Mammary epithelial cell (primary cell): ENCODE measurements at regions of chr6 and their contacts with region 1.

Region 1: DNA sequence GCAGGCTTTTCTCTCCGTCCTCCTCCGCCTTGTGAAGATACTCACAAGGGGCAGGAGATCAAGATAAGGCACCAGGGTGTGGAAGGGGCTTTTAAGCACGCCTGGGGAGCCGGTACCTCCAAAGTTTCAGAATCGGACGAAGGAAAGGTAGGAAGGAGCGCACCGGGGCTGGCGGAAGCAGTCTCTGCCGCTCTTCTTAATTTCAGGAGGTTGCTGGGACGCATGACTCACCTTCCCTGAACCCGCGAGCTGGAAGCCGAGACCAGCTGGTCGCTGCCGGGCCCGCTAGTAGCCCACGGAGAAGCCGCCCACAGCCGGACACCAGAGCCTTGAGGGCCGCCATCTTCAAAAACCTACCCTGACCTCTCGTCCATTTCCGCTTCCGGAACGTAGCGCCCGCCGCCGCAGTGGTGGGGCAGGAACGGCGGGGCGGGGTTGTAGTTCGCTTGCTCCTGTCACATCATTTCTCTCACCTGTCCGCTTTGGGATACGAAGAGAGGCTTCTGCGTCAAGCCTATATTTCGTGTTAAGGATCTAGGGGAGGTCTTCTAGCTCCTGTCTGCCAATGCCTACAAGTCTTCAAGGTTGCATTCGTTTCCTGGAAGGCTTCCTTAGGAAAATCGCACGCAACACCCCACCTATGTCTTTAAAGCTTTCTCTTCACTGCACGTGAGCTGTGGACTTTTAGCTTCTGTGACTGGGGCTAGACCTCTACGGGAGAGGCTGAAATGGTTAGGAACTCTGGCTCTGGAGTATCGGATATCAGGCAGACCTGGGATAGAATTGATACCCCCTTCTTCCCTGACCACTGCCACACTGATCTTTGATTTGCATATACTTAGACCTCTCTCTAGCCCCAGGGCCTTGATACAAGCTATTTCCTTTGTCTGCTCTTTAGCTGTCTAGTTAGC is at the start of gene MRPS18A:
- DNase-seq: peak; percentile 90
- H3K4me3 ChIP-seq: peak within 1 kb of the TSS; percentile 72 to 77 (median 76)
- H3K27ac ChIP-seq: peak within 1 kb of the TSS; percentile 69
- H3K4me1 ChIP-seq: peaks cover 14% of the 10 kb centered on the region
- H3K27me3 ChIP-seq: no peaks in the 10 kb centered on the region
- CTCF ChIP-seq: no peak
- total RNA-seq, gene MRPS18A: 27.0 to 49.0 TPM

Region 2: DNA sequence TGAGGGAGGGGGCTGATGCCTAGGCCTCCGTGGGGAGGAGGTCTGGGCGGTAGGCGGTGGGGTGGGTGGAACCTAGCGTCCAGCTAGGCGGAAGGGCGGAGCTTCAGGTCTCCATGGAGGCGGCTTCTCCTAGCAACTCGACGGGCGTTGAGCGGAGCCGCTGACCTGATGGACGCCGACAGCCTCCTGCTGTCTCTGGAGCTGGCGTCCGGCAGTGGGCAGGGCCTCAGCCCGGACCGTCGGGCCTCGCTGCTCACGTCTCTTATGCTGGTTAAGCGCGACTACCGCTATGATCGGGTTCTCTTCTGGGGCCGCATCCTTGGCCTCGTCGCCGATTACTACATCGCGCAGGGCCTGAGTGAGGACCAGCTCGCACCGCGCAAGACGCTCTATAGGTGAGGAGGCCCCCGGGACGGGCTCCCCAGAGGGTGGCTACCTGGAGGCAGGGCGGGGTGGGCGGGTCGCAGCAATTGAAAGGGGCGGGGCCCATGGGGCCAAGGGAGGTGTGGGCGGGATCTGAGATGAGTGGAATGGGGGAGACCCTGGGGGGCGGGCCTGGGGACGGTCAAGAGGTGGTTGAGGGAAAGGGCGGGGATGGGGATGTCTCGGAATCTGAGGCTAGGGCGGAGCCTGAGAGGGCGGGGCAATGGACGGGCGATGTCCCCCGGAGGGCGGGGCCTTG is 42.6 kb before region 1 on chr6 and contains the start of gene RSPH9:
- CTCF ChIA-PET with region 1: no interaction called
- dilution Hi-C with region 1: loop called (anchors 5 kb)
- in situ Hi-C with region 1: no loop called
- intact Hi-C with region 1: no loop called
- DNase-seq: no peak
- H3K4me3 ChIP-seq: peak within 1 kb of the TSS in 2 of 3 experiments; percentile 1 to 12
- H3K27ac ChIP-seq: no peak within 1 kb of the TSS
- H3K4me1 ChIP-seq: no peaks in the 10 kb centered on the region
- H3K27me3 ChIP-seq: no peaks in the 10 kb centered on the region
- CTCF ChIP-seq: no peak
- total RNA-seq, gene RSPH9: 0.50 TPM in 1 of 2 donors, not detected in the other

Region 3: DNA sequence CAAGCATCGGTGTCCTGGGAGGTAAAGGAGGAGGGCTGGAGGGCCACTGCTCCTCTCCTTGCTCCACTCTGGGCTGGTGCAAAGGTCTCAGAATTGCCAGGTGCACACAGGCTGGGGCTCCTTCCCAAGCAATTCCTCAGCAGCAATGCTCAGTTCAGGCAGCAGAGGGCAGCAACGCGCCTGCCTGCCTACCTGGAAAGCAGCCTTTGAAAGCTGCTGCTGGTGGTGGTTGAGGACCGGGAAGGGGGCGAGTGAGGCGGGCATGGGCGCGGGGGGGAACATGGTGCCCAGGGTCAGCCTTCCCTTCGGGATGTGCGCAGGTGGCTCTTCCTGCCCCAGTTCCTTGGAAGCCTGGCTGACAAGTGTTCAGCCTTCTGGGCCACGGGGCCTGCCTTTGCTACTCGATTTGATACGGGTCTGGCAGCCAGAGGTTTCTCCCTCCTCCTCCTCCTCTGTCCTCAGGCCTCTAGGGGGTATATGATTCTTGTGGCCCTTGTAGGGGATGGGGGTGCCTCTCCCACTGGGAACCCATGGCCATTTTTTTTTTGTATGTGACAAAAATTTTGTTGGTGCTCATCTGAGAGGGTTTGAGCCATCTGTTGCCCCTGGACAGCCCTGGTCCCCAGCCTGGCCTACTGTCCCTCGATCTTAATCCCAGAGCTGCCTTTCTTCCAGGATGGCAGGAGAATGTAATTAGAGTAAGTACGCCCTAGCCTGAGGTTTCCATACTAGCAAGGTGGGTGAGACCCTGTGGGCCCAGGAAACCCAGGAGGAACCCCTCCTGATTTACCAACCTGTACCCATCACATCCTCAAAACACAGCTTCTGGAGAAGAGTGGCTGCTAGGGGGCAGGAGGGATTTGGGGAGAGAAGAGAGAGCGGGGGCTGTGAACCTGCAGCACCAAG is 20.2 kb before region 1 on chr6:
- CTCF ChIA-PET with region 1: no interaction called
- dilution Hi-C with region 1: no loop called
- in situ Hi-C with region 1: no loop called
- intact Hi-C with region 1: loop called (anchors 2 kb)
- DNase-seq: peak; percentile 69
- H3K4me3 ChIP-seq: no peak overlapping the region
- H3K27ac ChIP-seq: peak overlapping the region; percentile 2
- H3K4me1 ChIP-seq: peaks cover 47% of the 10 kb centered on the region
- H3K27me3 ChIP-seq: no peaks in the 10 kb centered on the region
- CTCF ChIP-seq: peak; percentile 96 to 98

Region 4: DNA sequence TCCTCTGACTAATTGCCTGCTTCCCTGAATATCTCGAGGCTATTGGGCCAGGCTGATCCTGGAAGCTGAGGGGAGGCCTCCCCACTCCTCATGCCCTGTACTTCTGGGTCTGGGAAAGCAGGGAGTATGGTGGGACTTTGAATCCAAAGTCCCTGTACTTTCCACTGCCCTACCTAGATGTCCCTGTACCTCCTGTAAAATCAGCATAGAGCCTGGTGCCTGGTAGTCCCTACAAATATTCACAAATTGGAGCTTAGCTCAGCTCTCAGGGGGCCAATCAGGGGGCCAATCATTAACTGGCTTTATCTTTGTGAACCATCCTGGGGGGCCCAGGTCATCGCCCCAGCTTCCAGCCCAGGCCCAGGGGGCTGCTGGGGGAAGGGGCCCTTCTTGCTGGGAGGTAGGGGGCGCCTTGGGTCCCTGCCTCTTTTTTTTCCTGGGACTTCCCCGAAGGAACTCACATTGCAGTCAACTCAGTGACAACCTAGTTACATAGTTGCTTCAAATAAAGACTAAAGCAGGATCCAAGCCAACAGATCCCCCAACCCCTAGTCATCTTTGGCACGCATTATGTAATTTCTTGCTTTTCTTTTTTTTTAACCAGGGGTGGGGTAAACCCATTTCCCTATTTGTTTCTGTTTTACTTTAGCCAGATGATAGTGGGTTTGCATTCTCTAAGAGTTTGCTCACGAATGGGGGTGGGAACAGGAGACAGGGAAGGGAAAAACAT is 75.4 kb after region 1 on chr6:
- CTCF ChIA-PET with region 1: no interaction called
- dilution Hi-C with region 1: loop called (anchors 5 kb)
- in situ Hi-C with region 1: no loop called
- intact Hi-C with region 1: no loop called
- DNase-seq: no peak
- H3K4me3 ChIP-seq: no peak overlapping the region
- H3K27ac ChIP-seq: no peak overlapping the region
- H3K4me1 ChIP-seq: no peaks in the 10 kb centered on the region
- H3K27me3 ChIP-seq: no peaks in the 10 kb centered on the region
- CTCF ChIP-seq: no peak

Region 5: GRCh38 chr6:43977404-43978111 is 289.9 kb after region 1 on chr6:
- CTCF ChIA-PET with region 1: no interaction called
- dilution Hi-C with region 1: no loop called
- in situ Hi-C with region 1: no loop called
- intact Hi-C with region 1: no loop called
- DNase-seq: no peak
- H3K4me3 ChIP-seq: no peak overlapping the region
- H3K27ac ChIP-seq: no peak overlapping the region
- H3K4me1 ChIP-seq: peaks cover 14% of the 10 kb centered on the region
- H3K27me3 ChIP-seq: no peaks in the 10 kb centered on the region
- CTCF ChIP-seq: no peak